ENCODE measurements at regions of chr3 and their contacts with region 1.

Region 1: DNA sequence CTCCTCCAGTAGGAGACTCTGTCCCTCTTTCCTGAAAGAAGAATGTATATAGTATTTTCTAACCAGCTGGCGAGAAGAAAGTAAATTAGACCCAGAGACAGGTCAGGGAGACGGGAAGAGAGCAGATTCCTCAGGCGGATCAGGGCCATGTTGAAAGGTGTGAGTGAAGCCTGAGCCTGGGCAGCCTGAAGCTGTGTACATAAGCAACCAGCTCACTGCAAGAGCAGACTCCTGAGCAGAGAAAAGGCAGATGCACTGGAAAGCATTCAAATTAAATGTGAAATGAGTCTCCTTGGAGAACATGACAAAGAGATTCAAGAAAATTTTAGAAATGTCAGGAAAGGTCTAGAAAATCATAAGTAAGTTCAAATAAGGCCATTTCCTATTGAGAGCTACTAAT is 165.8 kb downstream of the GOLIM4 start:
- DNase-seq: peak in 1 of 3 donors; percentile 25
- ATAC-seq: no peak
- H3K4me3 ChIP-seq: no peak overlapping the region
- H3K27ac ChIP-seq: no peak overlapping the region
- H3K4me1 ChIP-seq: no peaks in the 10 kb centered on the region
- H3K27me3 ChIP-seq: no peaks in the 10 kb centered on the region

Region 2: GRCh38 chr3:168034152-168034928 is 104.4 kb after region 1 on chr3:
- intact Hi-C with region 1: loop called in 1 of 4 experiments (anchors 10 kb)
- DNase-seq: no peak
- ATAC-seq: peak; percentile 78 to 90
- H3K4me3 ChIP-seq: no peak overlapping the region
- H3K27ac ChIP-seq: peak overlapping the region; percentile 85
- H3K4me1 ChIP-seq: no peaks in the 10 kb centered on the region
- H3K27me3 ChIP-seq: no peaks in the 10 kb centered on the region

Region 3: GRCh38 chr3:168040607-168041208 is 110.7 kb after region 1 on chr3:
- intact Hi-C with region 1: loop called (anchors 5 to 10 kb)
- DNase-seq: no peak
- ATAC-seq: peak in 1 of 2 donors; percentile 51
- H3K4me3 ChIP-seq: no peak overlapping the region
- H3K27ac ChIP-seq: no peak overlapping the region
- H3K4me1 ChIP-seq: no peaks in the 10 kb centered on the region
- H3K27me3 ChIP-seq: no peaks in the 10 kb centered on the region